ENCODE measurements at regions of chr4 and their contacts with region 1.

Region 1: GRCh38 chr4:168057412-168057811 is 34.9 kb upstream of the ANXA10 start:
- DNase-seq: peak; percentile 24
- ATAC-seq: peak; percentile 97
- H3K4me3 ChIP-seq: no peak overlapping the region
- H3K27ac ChIP-seq: no peak overlapping the region
- H3K4me1 ChIP-seq: no peaks in the 10 kb centered on the region
- H3K27me3 ChIP-seq: no peaks in the 10 kb centered on the region
- CTCF ChIP-seq: no peak
- EP300 ChIP-seq: peak in 1 of 2 experiments; percentile 35; a peak in 1 of 4 replicates
- POLR2A ChIP-seq: no peak
- RAD21 ChIP-seq: no peak

Region 2: DNA sequence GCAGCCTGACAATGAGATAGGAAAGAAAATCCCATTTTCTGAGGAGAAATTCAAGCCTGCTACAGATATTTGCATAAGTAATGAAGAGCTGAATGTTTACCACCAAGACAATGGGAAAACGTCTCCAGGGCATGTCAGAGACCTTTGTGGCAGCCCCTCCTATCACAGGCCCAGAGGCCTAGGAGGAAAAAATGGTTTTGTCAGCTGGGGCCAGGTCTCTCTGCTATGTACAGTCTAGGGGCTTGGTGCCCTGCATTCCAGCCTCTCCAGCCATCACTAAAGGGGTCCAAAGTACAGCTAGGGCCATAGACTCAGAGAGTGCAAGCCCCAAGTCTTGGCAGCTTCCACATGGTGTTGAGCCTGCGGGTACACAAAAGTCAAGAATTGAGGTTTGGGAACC is 326.6 kb before region 1 on chr4:
- CTCF ChIA-PET with region 1: no interaction called
- POLR2A ChIA-PET with region 1: no interaction called
- RAD21 ChIA-PET with region 1: no interaction called
- SMC1A ChIA-PET with region 1: no interaction called
- in situ Hi-C with region 1: no loop called
- intact Hi-C with region 1: no loop called
- DNase-seq: no peak
- ATAC-seq: no peak
- H3K4me3 ChIP-seq: no peak overlapping the region
- H3K27ac ChIP-seq: no peak overlapping the region
- H3K4me1 ChIP-seq: no peaks in the 10 kb centered on the region
- H3K27me3 ChIP-seq: no peaks in the 10 kb centered on the region
- CTCF ChIP-seq: no peak
- EP300 ChIP-seq: no peak
- POLR2A ChIP-seq: no peak
- RAD21 ChIP-seq: no peak

Region 3: GRCh38 chr4:168045354-168045753 is 12.1 kb before region 1 on chr4:
- CTCF ChIA-PET with region 1: no interaction called
- POLR2A ChIA-PET with region 1: no interaction called
- RAD21 ChIA-PET with region 1: no interaction called
- SMC1A ChIA-PET with region 1: interaction called, 11 read pairs
- in situ Hi-C with region 1: no loop called
- intact Hi-C with region 1: no loop called
- DNase-seq: no peak
- ATAC-seq: no peak
- H3K4me3 ChIP-seq: no peak overlapping the region
- H3K27ac ChIP-seq: no peak overlapping the region
- H3K4me1 ChIP-seq: no peaks in the 10 kb centered on the region
- H3K27me3 ChIP-seq: no peaks in the 10 kb centered on the region
- CTCF ChIP-seq: no peak
- EP300 ChIP-seq: no peak
- POLR2A ChIP-seq: no peak
- RAD21 ChIP-seq: no peak

Region 4: DNA sequence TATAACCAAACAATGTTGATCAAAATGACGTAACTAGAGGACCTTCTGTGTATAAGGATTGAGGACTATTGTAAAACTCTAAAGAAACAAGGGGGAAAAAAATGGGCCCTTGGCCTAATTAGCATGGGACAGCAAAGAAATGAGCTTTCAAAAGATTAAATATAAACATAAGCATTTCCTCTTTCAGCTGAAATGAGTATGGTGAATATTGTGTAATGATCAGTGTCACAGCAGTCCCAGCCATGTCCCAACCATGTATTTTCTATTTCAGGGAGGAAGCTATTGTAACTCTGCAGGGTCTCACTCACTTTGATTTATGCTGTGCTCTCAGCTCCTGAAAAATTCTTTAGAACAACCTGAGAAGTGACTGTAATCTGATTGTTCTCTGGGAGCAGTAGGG is 60.7 kb after region 1 on chr4:
- CTCF ChIA-PET with region 1: no interaction called
- POLR2A ChIA-PET with region 1: interaction called, 10 read pairs
- RAD21 ChIA-PET with region 1: no interaction called
- SMC1A ChIA-PET with region 1: no interaction called
- in situ Hi-C with region 1: no loop called
- intact Hi-C with region 1: no loop called
- DNase-seq: no peak
- ATAC-seq: no peak
- H3K4me3 ChIP-seq: no peak overlapping the region
- H3K27ac ChIP-seq: no peak overlapping the region
- H3K4me1 ChIP-seq: no peaks in the 10 kb centered on the region
- H3K27me3 ChIP-seq: no peaks in the 10 kb centered on the region
- CTCF ChIP-seq: no peak
- EP300 ChIP-seq: no peak
- POLR2A ChIP-seq: no peak
- RAD21 ChIP-seq: no peak